Endothelial cell of umbilical vein (primary cell): ENCODE measurements at regions of chr5 and their contacts with region 1.

Region 1: GRCh38 chr5:55407059-55407684 is 99.4 kb downstream of the MTREX start:
- DNase-seq: peak; percentile 54
- H3K4me3 ChIP-seq: no peak overlapping the region
- H3K27ac ChIP-seq: no peak overlapping the region
- H3K4me1 ChIP-seq: no peaks in the 10 kb centered on the region
- H3K27me3 ChIP-seq: no peaks in the 10 kb centered on the region
- CTCF ChIP-seq: peak; percentile 46 to 64
- POLR2A ChIP-seq: no peak

Region 2: GRCh38 chr5:55418994-55419968 is 12.1 kb after region 1 on chr5:
- CTCF ChIA-PET with region 1: interaction called, 11 read pairs
- POLR2A ChIA-PET with region 1: no interaction called
- dilution Hi-C with region 1: no loop called
- intact Hi-C with region 1: no loop called
- DNase-seq: no peak
- H3K4me3 ChIP-seq: no peak overlapping the region
- H3K27ac ChIP-seq: no peak overlapping the region
- H3K4me1 ChIP-seq: no peaks in the 10 kb centered on the region
- H3K27me3 ChIP-seq: no peaks in the 10 kb centered on the region
- CTCF ChIP-seq: no peak
- POLR2A ChIP-seq: no peak

Region 3: GRCh38 chr5:55601204-55601618 is 194.0 kb after region 1 on chr5:
- CTCF ChIA-PET with region 1: interaction called, 3 read pairs
- POLR2A ChIA-PET with region 1: no interaction called
- dilution Hi-C with region 1: no loop called
- intact Hi-C with region 1: loop called (anchors 5 kb)
- DNase-seq: peak; percentile 83
- H3K4me3 ChIP-seq: peak overlapping the region in 1 of 3 experiments; percentile 40
- H3K27ac ChIP-seq: peak overlapping the region; percentile 92
- H3K4me1 ChIP-seq: peaks cover 35% of the 10 kb centered on the region
- H3K27me3 ChIP-seq: no peaks in the 10 kb centered on the region
- CTCF ChIP-seq: no peak
- POLR2A ChIP-seq: no peak